Naive thymus-derived CD4-positive, alpha-beta T cell (primary cell): ENCODE measurements at regions of chr10 and their contacts with region 1.

Region 1: DNA sequence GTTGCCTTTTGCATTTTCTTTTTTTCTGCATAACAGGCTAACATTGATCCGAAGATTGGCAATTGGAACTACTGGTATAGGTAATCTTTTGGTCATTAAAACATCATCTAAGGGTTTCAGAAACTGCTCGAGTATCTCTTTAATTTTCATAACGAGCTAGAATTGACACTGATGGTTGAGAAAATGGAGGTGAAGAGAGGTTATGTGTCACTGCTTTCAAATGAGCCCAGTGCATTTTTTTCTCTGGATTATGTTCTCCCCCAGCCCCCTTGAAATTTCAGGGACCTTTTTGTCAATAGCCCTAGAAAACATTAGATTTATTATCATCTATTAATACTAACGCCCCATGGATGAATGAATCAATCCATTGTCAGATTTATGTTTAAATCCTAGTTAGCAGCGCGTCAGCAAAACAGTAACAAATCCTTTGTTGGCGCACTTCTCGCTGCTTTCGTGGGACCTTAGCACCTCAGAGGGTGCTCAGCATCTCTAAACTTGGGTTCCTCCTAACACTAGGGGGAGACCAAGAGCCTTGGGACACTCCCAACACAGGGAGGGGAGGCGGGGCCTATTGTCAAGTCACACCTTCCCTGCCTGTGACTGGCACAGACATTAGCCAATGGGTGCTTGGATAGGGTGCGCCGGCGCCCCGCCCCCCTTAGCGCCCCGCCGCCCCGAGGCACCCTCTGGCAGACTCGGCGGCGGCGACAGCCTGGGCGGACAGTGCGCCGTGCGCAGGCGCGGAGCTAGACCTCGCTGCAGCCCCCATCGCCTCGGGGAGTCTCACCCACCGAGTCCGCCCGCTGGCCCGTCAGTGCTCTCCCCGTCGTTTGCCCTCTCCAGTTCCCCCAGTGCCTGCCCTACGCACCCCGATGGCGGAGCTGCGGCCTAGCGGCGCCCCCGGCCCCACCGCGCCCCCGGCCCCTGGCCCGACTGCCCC is at the start of gene SUFU:
- DNase-seq: peak; percentile 91 to 99 (median 98)
- ATAC-seq: peak; percentile 85
- H3K4me3 ChIP-seq: peak within 1 kb of the TSS; percentile 92
- H3K4me3 Mint-ChIP-seq: no peak within 1 kb of the TSS
- H3K27ac ChIP-seq: peak within 1 kb of the TSS; percentile 88
- H3K27ac Mint-ChIP-seq: peak within 1 kb of the TSS in 7 of 9 donors; percentile 78 to 95 (median 83)
- H3K4me1 ChIP-seq: peaks cover 19 to 29% of the 10 kb centered on the region in 2 donors
- H3K4me1 Mint-ChIP-seq: peaks cover 22 to 49% (median 41%) of the 10 kb centered on the region in 7 donors
- H3K27me3 ChIP-seq: no peaks in the 10 kb centered on the region
- H3K27me3 Mint-ChIP-seq: no peaks in the 10 kb centered on the region
- total RNA-seq, gene SUFU: 10.7 to 17.5 (median 16.1) TPM

Region 2: GRCh38 chr10:101353692-101354327 is 1149.7 kb before region 1 on chr10 and contains the start of gene BTRC:
- CTCF ChIA-PET with region 1: no interaction called
- POLR2A ChIA-PET with region 1: no interaction called
- intact Hi-C with region 1: loop called in 1 of 2 experiments (anchors 2 kb)
- DNase-seq: peak; percentile 76 to 99 (median 98)
- ATAC-seq: peak; percentile 96
- H3K4me3 ChIP-seq: peak within 1 kb of the TSS; percentile 69
- H3K4me3 Mint-ChIP-seq: peak within 1 kb of the TSS; percentile 93 to 99 (median 98)
- H3K27ac ChIP-seq: peak within 1 kb of the TSS; percentile 94
- H3K27ac Mint-ChIP-seq: peak within 1 kb of the TSS; percentile 94 to 99 (median 98)
- H3K4me1 ChIP-seq: peaks cover 5 to 8% of the 10 kb centered on the region in 2 donors
- H3K4me1 Mint-ChIP-seq: peaks cover 15 to 41% (median 33%) of the 10 kb centered on the region in 7 donors
- H3K27me3 ChIP-seq: no peaks in the 10 kb centered on the region
- H3K27me3 Mint-ChIP-seq: peaks cover 5 to 19% (median 14%) of the 10 kb centered on the region in 5 donors
- total RNA-seq, gene BTRC: 14.7 to 26.1 (median 17.6) TPM

Region 3: GRCh38 chr10:102064868-102065560 is 438.5 kb before region 1 on chr10 and contains the start of gene HPS6:
- CTCF ChIA-PET with region 1: no interaction called
- POLR2A ChIA-PET with region 1: no interaction called
- intact Hi-C with region 1: loop called (anchors 2 kb)
- DNase-seq: peak; percentile 73 to 94 (median 81)
- ATAC-seq: peak; percentile 98
- H3K4me3 ChIP-seq: peak within 1 kb of the TSS; percentile 82
- H3K4me3 Mint-ChIP-seq: peak within 1 kb of the TSS; percentile 79 to 91 (median 89)
- H3K27ac ChIP-seq: peak within 1 kb of the TSS; percentile 93
- H3K27ac Mint-ChIP-seq: peak within 1 kb of the TSS; percentile 85 to 97 (median 93)
- H3K4me1 ChIP-seq: peaks cover 14 to 23% of the 10 kb centered on the region in 2 donors
- H3K4me1 Mint-ChIP-seq: peaks cover 23 to 43% (median 36%) of the 10 kb centered on the region in 7 donors
- H3K27me3 ChIP-seq: no peaks in the 10 kb centered on the region
- H3K27me3 Mint-ChIP-seq: no peaks in the 10 kb centered on the region
- total RNA-seq, gene HPS6: 12.1 to 24.2 (median 20.9) TPM

Region 4: DNA sequence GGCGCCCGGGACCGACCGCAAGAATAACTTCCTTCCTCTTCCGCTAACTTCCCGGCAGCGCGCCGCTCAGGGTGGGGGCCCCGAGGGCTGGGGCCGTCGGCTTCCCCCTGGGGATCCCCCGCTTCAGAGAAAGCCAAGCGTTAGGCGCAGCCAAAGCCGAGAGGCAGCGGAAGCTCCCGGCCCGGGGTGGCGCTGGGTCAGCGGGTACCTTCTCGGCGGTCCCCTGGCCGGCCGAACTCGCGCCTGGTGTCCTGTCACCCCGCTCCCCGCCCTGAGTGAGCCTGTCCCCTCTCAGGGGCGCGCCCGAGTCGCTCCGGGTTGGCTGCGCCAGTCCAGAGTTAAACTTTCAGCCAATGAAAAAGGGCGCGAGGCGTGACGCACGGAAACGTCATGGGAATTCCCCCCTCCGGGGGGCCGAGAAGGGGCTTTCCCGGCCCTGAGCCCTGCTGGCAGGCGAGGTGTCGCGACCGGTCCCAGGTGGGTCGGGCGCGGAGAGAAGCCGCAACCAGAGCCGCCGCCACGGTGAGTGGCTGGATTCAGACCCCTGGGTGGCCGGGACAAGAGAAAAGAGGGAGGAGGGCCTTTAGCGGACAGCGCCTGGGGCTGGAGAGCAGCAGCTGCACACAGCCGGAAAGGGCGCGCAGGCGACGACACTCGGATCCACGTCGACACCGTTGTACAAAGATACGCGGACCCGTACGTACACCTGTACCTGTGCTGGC is 109.3 kb before region 1 on chr10:
- CTCF ChIA-PET with region 1: interaction called, 5 read pairs
- POLR2A ChIA-PET with region 1: interaction called, 12 read pairs
- intact Hi-C with region 1: loop called (anchors 1 kb)
- DNase-seq: peak; percentile 96 to 100 (median 99)
- ATAC-seq: peak; percentile 83
- H3K4me3 ChIP-seq: peak overlapping the region; percentile 78
- H3K4me3 Mint-ChIP-seq: peak overlapping the region; percentile 92 to 99 (median 96)
- H3K27ac ChIP-seq: peak overlapping the region; percentile 100
- H3K27ac Mint-ChIP-seq: peak overlapping the region; percentile 94 to 100 (median 100)
- H3K4me1 ChIP-seq: peaks cover 16 to 24% of the 10 kb centered on the region in 2 donors
- H3K4me1 Mint-ChIP-seq: peaks cover 20 to 45% (median 39%) of the 10 kb centered on the region in 7 donors
- H3K27me3 ChIP-seq: no peaks in the 10 kb centered on the region
- H3K27me3 Mint-ChIP-seq: peaks cover 0 to 4% (median 0%) of the 10 kb centered on the region in 5 donors

Region 5: GRCh38 chr10:102461187-102462054 is 42.1 kb before region 1 on chr10:
- CTCF ChIA-PET with region 1: no interaction called
- POLR2A ChIA-PET with region 1: interaction called, 4 read pairs
- intact Hi-C with region 1: loop called (anchors 1 kb)
- DNase-seq: peak; percentile 84 to 95 (median 90)
- ATAC-seq: peak; percentile 99
- H3K4me3 ChIP-seq: peak overlapping the region; percentile 93
- H3K4me3 Mint-ChIP-seq: peak overlapping the region; percentile 83 to 96 (median 92)
- H3K27ac ChIP-seq: peak overlapping the region; percentile 74
- H3K27ac Mint-ChIP-seq: peak overlapping the region; percentile 72 to 90 (median 85)
- H3K4me1 ChIP-seq: peaks cover 9 to 14% of the 10 kb centered on the region in 2 donors
- H3K4me1 Mint-ChIP-seq: peaks cover 19 to 40% (median 34%) of the 10 kb centered on the region in 7 donors
- H3K27me3 ChIP-seq: no peaks in the 10 kb centered on the region
- H3K27me3 Mint-ChIP-seq: peaks cover 0 to 2% (median 0%) of the 10 kb centered on the region in 5 donors

Region 6: GRCh38 chr10:102673819-102674511 is 170.4 kb after region 1 on chr10:
- CTCF ChIA-PET with region 1: no interaction called
- POLR2A ChIA-PET with region 1: interaction called, 3 read pairs
- intact Hi-C with region 1: loop called (anchors 1 kb)
- DNase-seq: peak; percentile 34 to 91 (median 89)
- ATAC-seq: peak; percentile 91
- H3K4me3 ChIP-seq: peak overlapping the region; percentile 52
- H3K4me3 Mint-ChIP-seq: peak overlapping the region; percentile 78 to 93 (median 85)
- H3K27ac ChIP-seq: peak overlapping the region; percentile 85
- H3K27ac Mint-ChIP-seq: peak overlapping the region; percentile 75 to 97 (median 91)
- H3K4me1 ChIP-seq: peaks cover 18 to 41% of the 10 kb centered on the region in 2 donors
- H3K4me1 Mint-ChIP-seq: peaks cover 36 to 82% (median 58%) of the 10 kb centered on the region in 7 donors
- H3K27me3 ChIP-seq: no peaks in the 10 kb centered on the region
- H3K27me3 Mint-ChIP-seq: no peaks in the 10 kb centered on the region

Region 7: DNA sequence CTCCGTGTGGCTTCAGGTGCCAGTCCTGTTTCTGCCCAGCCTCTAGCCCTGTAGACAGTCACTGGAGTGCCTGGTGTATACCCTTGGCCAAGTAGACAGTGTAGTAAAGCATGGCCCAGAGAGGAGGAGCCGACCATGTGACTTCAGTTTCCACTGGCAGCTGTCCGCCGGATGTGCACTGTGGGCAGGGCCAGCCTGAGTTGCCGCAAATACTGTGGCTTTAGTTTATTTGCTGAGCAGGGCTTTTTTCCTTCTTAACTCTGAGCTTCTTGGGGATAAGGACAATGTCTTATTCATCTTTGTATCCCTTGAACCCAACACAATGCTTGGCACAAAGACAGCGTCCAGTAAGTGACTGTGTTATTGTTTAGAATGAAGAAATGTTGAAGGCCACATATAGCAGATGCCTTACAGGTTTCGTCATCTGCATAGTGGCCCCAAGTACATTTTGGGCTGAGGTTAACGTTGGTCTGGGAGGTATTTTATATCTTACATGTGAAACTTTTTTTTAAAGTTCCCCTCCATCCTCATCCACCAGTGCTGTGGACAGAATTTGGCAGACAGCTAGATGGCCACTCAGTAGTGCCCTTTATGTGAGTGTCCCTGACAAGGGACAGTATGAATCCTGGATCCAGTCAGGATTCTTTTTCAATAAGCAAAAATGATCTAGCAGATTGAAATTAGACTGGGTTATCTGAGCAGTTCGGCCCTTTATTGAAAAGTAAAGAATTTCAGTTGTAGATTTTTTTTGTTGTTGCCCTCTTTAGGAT is 293.0 kb after region 1 on chr10:
- CTCF ChIA-PET with region 1: no interaction called
- POLR2A ChIA-PET with region 1: no interaction called
- intact Hi-C with region 1: no loop called
- DNase-seq: peak in 8 of 9 donors; percentile 9 to 55 (median 34)
- ATAC-seq: peak; percentile 95
- H3K4me3 ChIP-seq: peak overlapping the region; percentile 17
- H3K4me3 Mint-ChIP-seq: peak overlapping the region; percentile 33 to 66 (median 54)
- H3K27ac ChIP-seq: peak overlapping the region; percentile 1
- H3K27ac Mint-ChIP-seq: peak overlapping the region; percentile 28 to 79 (median 47)
- H3K4me1 ChIP-seq: peaks cover 13 to 24% of the 10 kb centered on the region in 2 donors
- H3K4me1 Mint-ChIP-seq: peaks cover 26 to 60% (median 52%) of the 10 kb centered on the region in 7 donors
- H3K27me3 ChIP-seq: no peaks in the 10 kb centered on the region
- H3K27me3 Mint-ChIP-seq: no peaks in the 10 kb centered on the region

Region 8: DNA sequence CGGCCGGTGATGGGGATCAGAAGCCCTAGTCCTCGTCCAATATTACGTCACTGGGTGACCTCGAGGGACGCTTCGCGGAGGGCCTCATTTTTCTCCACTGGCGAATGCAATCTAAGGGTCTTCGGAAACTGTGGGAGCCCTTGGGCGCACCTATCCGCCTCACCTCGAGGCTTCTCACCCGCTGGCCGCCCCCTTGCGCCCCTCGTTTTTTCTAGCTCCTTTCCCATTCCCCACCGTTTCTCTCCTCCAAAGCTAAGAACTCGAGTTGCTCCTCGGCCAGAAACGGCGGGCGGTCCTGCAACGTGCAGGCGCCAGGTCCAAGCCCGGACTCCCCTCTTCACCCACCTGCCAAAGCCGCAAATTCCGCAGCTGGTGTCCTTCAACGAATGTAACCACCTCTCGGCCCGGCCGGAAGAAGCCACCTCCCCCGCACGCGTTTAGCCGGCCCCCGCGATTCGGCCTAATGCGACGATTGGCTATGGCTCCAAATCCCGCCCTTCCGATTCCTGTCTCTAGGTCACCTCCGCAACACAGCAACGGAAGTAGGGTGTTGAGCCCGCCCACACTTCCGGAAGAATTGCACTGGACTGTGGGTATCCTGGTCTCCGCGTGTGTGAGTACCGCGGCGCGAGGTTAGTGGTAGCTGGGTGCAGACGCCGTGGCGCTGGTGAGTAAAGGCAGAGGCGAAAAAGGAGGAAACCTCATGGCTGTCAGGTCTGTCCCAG is 892.7 kb after region 1 on chr10 and contains the starts of genes ATP5MK and PDCD11:
- CTCF ChIA-PET with region 1: no interaction called
- POLR2A ChIA-PET with region 1: no interaction called
- intact Hi-C with region 1: loop called in 1 of 2 experiments (anchors 1 kb)
- DNase-seq: peak; percentile 75 to 93 (median 91)
- ATAC-seq: peak; percentile 100
- H3K4me3 ChIP-seq: peak within 1 kb of the TSS; percentile 91
- H3K4me3 Mint-ChIP-seq: peak within 1 kb of the TSS; percentile 91 to 99 (median 99)
- H3K27ac ChIP-seq: peak within 1 kb of the TSS; percentile 87
- H3K27ac Mint-ChIP-seq: peak within 1 kb of the TSS; percentile 89 to 97 (median 96)
- H3K4me1 ChIP-seq: peaks cover 25 to 33% of the 10 kb centered on the region in 2 donors
- H3K4me1 Mint-ChIP-seq: peaks cover 42 to 68% (median 62%) of the 10 kb centered on the region in 7 donors
- H3K27me3 ChIP-seq: no peaks in the 10 kb centered on the region
- H3K27me3 Mint-ChIP-seq: no peaks in the 10 kb centered on the region
- total RNA-seq, gene ATP5MK: 106 to 334 (median 120) TPM
- total RNA-seq, gene PDCD11: 28.8 to 56.3 (median 38.8) TPM